ENCODE measurements at regions of chr1 and their contacts with region 1.

Region 1: DNA sequence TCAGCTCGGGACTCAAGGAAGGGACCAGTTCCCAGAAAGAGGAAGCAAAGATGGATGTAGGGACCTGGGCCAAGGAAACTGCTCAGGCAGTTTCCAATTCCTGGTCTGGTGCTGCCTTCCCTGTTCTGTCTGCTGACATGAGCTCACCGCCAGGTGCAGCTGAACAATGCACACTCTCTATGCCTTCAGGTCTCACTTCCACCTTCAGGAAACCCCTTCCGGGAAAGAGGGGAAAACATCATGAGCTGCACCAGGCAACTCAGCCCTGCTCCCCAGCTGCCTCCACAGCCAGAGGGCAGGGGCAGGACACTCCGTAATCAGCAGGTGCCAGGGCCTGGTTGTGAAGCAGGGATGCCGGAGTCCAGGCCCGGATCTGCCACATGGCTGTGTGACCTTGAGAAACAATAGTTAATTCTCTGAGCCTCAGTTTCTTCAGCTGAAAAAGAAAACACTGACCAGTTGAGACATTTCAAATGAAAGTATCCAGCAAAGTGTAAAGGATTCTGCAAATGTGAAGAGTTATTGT is 27.8 kb downstream of the SMIM12 start:
- DNase-seq: peak in 1 of 2 experiments; percentile 30
- H3K4me3 ChIP-seq: no peak overlapping the region
- H3K27ac ChIP-seq: no peak overlapping the region
- H3K4me1 ChIP-seq: no peaks in the 10 kb centered on the region; a peak in 1 of 7 replicates
- H3K27me3 ChIP-seq: no peaks in the 10 kb centered on the region
- CTCF ChIP-seq: no peak
- EP300 ChIP-seq: no peak
- POLR2A ChIP-seq: no peak
- RAD21 ChIP-seq: no peak

Region 2: DNA sequence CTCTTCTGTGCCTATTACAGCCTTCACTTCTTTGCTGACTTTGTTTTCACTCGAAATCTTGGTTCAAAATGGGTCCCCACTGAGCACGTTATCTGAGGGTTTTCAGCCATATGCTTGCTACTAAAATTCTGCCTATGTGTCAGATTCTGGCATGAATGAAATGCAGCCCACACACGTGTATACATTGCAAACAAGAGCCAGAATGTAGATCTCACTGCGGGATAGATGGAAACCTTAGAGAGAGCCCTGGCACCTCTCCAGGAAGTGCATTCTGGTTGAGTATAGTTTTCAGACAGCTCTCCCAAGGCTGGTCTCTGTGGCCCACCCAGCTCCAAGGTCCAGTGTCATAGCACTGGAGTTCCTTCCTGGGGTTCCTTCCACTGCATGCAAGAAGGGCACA is 311.7 kb before region 1 on chr1:
- CTCF ChIA-PET with region 1: no interaction called
- POLR2A ChIA-PET with region 1: no interaction called
- DNase-seq: no peak
- H3K4me3 ChIP-seq: no peak overlapping the region
- H3K27ac ChIP-seq: no peak overlapping the region
- H3K4me1 ChIP-seq: no peaks in the 10 kb centered on the region
- H3K27me3 ChIP-seq: no peaks in the 10 kb centered on the region
- CTCF ChIP-seq: no peak
- EP300 ChIP-seq: no peak
- POLR2A ChIP-seq: no peak
- RAD21 ChIP-seq: no peak

Region 3: DNA sequence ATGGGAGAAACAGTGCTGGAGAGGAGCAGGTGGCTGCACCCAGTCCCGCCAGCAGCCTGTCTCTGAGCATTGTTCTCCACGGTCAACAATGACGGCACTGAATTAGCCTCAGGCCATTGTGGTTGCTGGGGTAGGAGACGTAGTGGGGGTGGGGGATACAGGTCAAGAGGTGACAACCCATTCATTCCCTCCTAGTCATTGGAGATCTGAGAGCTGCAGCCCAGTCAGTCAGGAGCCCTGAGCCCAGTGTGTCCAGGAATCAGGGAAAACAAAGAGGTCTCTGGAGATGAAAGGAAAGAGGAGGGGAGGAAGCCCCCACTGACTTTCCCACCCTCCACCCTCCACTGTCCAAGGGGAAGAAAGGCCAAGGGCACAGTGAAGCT is 12.5 kb after region 1 on chr1:
- CTCF ChIA-PET with region 1: interaction called, 11 read pairs
- POLR2A ChIA-PET with region 1: interaction called, 3 read pairs
- DNase-seq: no peak
- H3K4me3 ChIP-seq: 0 out of 8 replicates have a peak overlapping the region, but pooled peaks of 2 of the 4 experiments have one; percentile 12 to 23
- H3K27ac ChIP-seq: no peak overlapping the region
- H3K4me1 ChIP-seq: peaks cover 16 to 27% (median 18%) of the 10 kb centered on the region in 4 experiments
- H3K27me3 ChIP-seq: no peaks in the 10 kb centered on the region
- CTCF ChIP-seq: no peak
- EP300 ChIP-seq: no peak
- POLR2A ChIP-seq: no peak
- RAD21 ChIP-seq: no peak

Measured in H1 (cell line).